Posterior cingulate gyrus (tissue), 11 donors: ENCODE measurements at regions of chr4 and their contacts with region 1.

Region 1: GRCh38 chr4:87679449-87680169 is 29.5 kb downstream of the DMP1 start:
- DNase-seq: peak in 8 of 10 donors; percentile 35 to 93 (median 65)

Region 2: GRCh38 chr4:87543835-87544461 is 135.7 kb before region 1 on chr4:
- intact Hi-C with region 1: loop called (anchors 5 kb)
- DNase-seq: peak in 1 of 10 donors; percentile 29

Region 3: GRCh38 chr4:87781569-87781968 is 102.0 kb after region 1 on chr4:
- intact Hi-C with region 1: no loop called
- DNase-seq: no peak

Region 4: GRCh38 chr4:87838890-87839591 is 159.4 kb after region 1 on chr4:
- intact Hi-C with region 1: loop called (anchors 2 kb)
- DNase-seq: peak in 7 of 10 donors; percentile 25 to 92 (median 46)

Region 5: GRCh38 chr4:87973283-87974169 is 293.9 kb after region 1 on chr4:
- intact Hi-C with region 1: loop called (anchors 10 kb)
- DNase-seq: peak in 8 of 10 donors; percentile 41 to 90 (median 75)

Region 6: DNA sequence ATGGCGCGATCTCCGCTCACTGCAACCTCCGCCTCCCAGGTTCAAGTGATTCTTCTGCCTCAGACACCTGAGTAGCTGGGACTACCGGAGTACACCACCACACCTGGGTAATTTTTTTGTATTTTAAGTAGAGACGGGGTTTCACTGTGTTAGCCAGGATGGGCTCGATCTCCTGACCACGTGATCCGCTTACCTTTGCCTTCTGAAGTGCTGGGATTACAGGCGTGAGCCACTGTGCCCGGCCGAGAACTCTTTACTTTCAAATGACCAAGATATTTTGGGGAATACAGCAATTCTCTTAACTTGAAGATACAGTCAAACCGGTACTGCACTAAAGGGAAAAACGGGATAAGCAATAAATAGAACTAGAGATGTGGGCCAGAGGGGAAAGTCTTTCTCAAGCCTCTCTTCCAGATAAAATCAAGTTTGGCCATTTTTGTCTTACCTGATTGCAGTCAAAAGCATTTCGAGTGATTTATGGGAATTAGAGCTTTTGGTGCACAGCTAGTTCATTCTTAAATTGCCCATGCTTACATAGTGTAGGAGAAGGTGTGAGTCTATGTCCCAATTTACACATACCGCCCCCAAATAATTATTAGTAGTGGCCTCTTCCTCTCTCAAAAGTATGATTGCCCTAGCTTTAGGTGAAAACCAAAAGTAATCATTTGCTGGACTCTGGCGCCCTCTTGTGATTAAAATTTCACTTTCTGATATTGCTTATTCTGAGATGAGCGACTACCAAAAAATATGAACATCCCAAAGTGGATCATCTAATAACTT is 532.1 kb after region 1 on chr4:
- intact Hi-C with region 1: loop called (anchors 10 kb)
- DNase-seq: peak in 2 of 10 donors; percentile 22 to 58